ENCODE measurements at regions of chr1 and their contacts with region 1.

Region 1: GRCh38 chr1:99707535-99708142 is 58.8 kb downstream of the FRRS1 start:
- DNase-seq: peak; percentile 79
- ATAC-seq: peak; percentile 61
- H3K4me3 Mint-ChIP-seq: no peak overlapping the region
- H3K27ac Mint-ChIP-seq: no peak overlapping the region
- H3K4me1 Mint-ChIP-seq: peaks cover 12% of the 10 kb centered on the region
- H3K27me3 Mint-ChIP-seq: no peaks in the 10 kb centered on the region

Region 2: DNA sequence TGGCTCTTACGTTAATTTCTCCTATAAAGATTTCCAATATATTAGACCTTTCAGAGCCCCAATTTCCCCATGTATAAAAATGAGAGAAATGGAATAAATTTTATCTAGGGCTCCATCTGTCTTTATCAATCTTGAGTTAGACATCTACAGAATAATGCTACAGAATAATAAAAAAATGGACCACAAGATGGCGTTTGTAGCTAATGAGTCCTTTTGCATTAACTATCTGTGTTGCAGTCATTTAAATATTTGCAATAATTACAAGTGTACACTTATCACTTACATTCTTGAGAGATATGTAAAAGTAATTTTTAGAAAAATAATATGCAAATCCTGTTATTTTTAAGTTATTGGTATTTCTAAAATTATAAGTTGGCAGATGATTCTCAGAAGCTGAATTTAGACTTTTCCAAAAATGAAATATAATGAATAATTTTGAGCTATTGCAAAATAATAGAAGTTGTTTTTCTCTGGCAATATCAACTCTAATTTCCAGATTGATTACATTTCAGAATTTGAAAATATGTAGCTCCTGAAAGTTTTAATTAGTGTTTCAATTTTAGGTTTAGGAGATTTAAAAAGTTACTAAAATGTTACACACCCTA is 958.4 kb before region 1 on chr1:
- CTCF ChIA-PET with region 1: interaction called, 3 read pairs
- POLR2A ChIA-PET with region 1: no interaction called
- intact Hi-C with region 1: loop called in 1 of 2 experiments (anchors 2 kb)
- DNase-seq: no peak
- ATAC-seq: no peak
- H3K4me3 Mint-ChIP-seq: no peak overlapping the region
- H3K27ac Mint-ChIP-seq: no peak overlapping the region
- H3K4me1 Mint-ChIP-seq: no peaks in the 10 kb centered on the region
- H3K27me3 Mint-ChIP-seq: peaks cover 2% of the 10 kb centered on the region

Region 3: GRCh38 chr1:99180343-99180808 is 527.3 kb before region 1 on chr1:
- CTCF ChIA-PET with region 1: interaction called, 6 read pairs
- POLR2A ChIA-PET with region 1: no interaction called
- intact Hi-C with region 1: loop called (anchors 1 kb)
- DNase-seq: peak; percentile 80
- ATAC-seq: peak; percentile 91
- H3K4me3 Mint-ChIP-seq: no peak overlapping the region
- H3K27ac Mint-ChIP-seq: no peak overlapping the region
- H3K4me1 Mint-ChIP-seq: no peaks in the 10 kb centered on the region
- H3K27me3 Mint-ChIP-seq: no peaks in the 10 kb centered on the region

Region 4: GRCh38 chr1:99481391-99481996 is 226.1 kb before region 1 on chr1:
- CTCF ChIA-PET with region 1: interaction called, 3 read pairs
- POLR2A ChIA-PET with region 1: no interaction called
- intact Hi-C with region 1: loop called (anchors 1 to 10 kb)
- DNase-seq: peak; percentile 46
- ATAC-seq: no peak
- H3K4me3 Mint-ChIP-seq: no peak overlapping the region
- H3K27ac Mint-ChIP-seq: no peak overlapping the region
- H3K4me1 Mint-ChIP-seq: no peaks in the 10 kb centered on the region
- H3K27me3 Mint-ChIP-seq: peaks cover 4% of the 10 kb centered on the region

Region 5: DNA sequence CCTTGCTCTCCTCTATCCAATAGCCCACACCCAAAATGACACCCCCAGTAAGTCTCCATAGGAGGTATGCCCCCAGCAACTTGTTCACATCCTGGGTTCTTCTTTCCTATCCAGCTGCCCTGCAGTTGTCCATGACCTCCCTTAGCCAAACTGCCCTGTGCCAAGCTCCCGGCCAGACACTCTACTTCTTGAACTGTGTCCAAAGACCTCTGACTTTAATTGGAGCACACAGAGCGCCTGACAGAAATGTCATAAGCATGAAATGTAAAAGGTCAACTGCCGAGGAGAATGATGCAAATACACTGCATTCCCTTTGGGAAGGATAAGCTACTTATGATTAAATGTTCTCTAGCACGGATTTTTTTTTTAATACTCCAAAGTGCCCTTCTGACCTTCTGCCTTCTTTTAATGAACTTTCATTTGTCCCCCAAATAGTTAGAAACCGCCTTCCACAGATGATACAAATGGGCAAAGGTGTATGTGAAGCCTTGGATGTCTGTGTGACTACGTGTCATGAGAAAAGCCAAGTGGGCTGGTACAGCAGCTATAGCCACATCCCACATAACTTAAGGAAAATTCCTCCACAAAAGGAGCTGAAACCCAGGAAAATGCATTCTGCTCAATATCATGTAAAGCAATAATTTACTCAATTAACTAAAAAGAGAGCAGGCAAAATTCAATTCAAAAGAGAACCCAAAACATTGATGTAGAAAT is 35.0 kb before region 1 on chr1:
- CTCF ChIA-PET with region 1: no interaction called
- POLR2A ChIA-PET with region 1: no interaction called
- intact Hi-C with region 1: no loop called
- DNase-seq: no peak
- ATAC-seq: no peak
- H3K4me3 Mint-ChIP-seq: no peak overlapping the region
- H3K27ac Mint-ChIP-seq: no peak overlapping the region
- H3K4me1 Mint-ChIP-seq: no peaks in the 10 kb centered on the region
- H3K27me3 Mint-ChIP-seq: peaks cover 19% of the 10 kb centered on the region